Dorsolateral prefrontal cortex (tissue), 120 donors: ENCODE measurements at regions of chr5 and their contacts with region 1.

Region 1: GRCh38 chr5:93385655-93386054 is 195.4 kb downstream of the NR2F1-AS1 start:
- DNase-seq: no peak
- H3K4me3 ChIP-seq: no peak overlapping the region
- H3K27ac ChIP-seq: no peak overlapping the region
- H3K27me3 ChIP-seq: no peaks in the 10 kb centered on the region
- CTCF ChIP-seq: no peak

Region 2: DNA sequence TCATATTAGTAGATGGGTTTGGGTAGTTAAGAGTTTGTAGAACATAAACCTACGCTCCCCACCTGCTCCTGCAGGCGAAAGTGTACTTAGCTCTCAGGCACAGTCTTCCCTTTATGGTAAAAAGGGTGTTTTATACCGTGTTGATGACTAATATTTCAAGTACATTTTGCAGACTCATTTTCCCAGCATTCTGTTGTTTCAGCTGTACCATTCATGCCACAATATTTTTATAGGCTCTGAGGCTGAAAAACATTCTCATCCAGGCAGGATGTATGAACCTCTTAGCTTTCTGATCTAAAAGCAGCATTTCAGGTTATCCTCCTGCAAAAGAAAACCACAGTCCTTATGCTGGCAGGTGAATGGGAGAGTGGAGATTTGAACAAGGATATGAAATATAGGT is 36.0 kb before region 1 on chr5:
- intact Hi-C with region 1: no loop called
- DNase-seq: no peak
- H3K4me3 ChIP-seq: no peak overlapping the region
- H3K27ac ChIP-seq: no peak overlapping the region
- H3K27me3 ChIP-seq: no peaks in the 10 kb centered on the region
- CTCF ChIP-seq: no peak

Region 3: DNA sequence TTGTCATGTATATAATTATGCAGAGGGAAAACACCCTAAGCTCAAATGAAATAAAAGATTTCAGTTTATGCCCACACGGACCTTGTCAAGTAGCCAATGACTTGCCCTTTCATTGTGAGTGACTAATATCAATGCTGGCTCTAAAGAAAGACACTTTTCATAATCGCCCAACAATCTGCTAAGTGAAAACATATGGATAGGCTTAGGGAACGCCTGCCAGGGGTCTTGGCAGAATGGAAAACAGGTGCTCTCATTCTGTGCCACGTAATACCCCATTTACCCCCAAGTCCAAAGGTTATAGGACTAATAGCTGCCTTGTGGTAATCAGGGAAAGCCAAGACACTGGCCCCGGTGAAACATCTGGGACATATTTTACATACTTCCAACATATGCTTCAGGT is 1390.5 kb after region 1 on chr5:
- intact Hi-C with region 1: loop called in 1 of 2 experiments (anchors 10 kb)
- DNase-seq: no peak
- H3K4me3 ChIP-seq: no peak overlapping the region
- H3K27ac ChIP-seq: no peak overlapping the region
- H3K27me3 ChIP-seq: no peaks in the 10 kb centered on the region
- CTCF ChIP-seq: no peak